HepG2 (cell line): ENCODE measurements at regions of chr3 and their contacts with region 1.

Region 1: GRCh38 chr3:99920481-99921376 is 103.1 kb downstream of the CMSS1 start:
- DNase-seq: peak; percentile 97
- ATAC-seq: peak; percentile 89
- H3K4me3 ChIP-seq: peak overlapping the region in 2 of 3 experiments; percentile 17 to 42; a peak in 1 of 6 replicates
- H3K27ac ChIP-seq: peak overlapping the region; percentile 94
- H3K4me1 ChIP-seq: peaks cover 100% of the 10 kb centered on the region
- H3K27me3 ChIP-seq: no peaks in the 10 kb centered on the region
- CTCF ChIP-seq: peak; percentile 47
- EP300 ChIP-seq: peak; percentile 39 to 95; a peak in 3 of 4 replicates
- POLR2A ChIP-seq: peak; percentile 28 to 58; a peak in 2 of 4 replicates
- RAD21 ChIP-seq: no peak

Region 2: DNA sequence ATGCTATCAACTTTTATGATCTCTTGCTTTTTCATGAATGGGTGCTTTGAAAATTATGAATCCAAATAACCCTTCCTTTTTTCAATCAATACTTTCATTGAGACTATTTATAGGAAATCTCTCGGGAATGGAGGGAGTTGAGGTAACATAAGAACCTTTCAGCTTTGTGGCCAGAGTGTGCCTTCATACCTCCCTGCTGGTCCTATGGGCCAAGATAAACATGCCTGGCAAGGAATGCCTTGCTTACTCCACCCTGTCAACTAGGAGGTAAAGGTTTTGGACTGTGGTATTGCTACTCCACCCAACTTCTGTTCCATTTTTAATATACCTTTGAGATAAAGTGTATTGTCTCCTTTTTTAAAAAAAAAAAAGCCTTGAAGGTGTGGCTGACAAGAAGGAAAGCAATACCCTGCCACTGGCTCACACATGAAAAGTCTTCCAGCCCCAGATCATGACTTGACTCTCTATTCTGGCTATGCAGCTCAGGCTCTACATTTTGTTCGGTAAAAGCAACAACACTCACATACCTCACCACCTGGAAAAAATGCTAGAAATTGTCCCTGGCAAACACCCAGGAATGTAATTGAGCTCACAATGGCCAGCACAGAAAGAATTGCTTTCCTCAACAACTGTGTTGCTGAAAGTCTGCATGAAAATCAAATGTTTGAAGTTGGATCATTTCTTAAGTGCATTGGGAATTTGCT is 246.5 kb before region 1 on chr3:
- CTCF ChIA-PET with region 1: no interaction called
- POLR2A ChIA-PET with region 1: no interaction called
- in situ Hi-C with region 1: no loop called
- intact Hi-C with region 1: no loop called
- DNase-seq: no peak
- ATAC-seq: no peak
- H3K4me3 ChIP-seq: no peak overlapping the region
- H3K27ac ChIP-seq: no peak overlapping the region
- H3K4me1 ChIP-seq: no peaks in the 10 kb centered on the region
- H3K27me3 ChIP-seq: no peaks in the 10 kb centered on the region; a peak in 1 of 5 replicates
- CTCF ChIP-seq: no peak
- EP300 ChIP-seq: no peak
- POLR2A ChIP-seq: no peak
- RAD21 ChIP-seq: no peak

Region 3: GRCh38 chr3:99825004-99825640 is 95.6 kb before region 1 on chr3:
- CTCF ChIA-PET with region 1: no interaction called
- POLR2A ChIA-PET with region 1: no interaction called
- in situ Hi-C with region 1: no loop called
- intact Hi-C with region 1: no loop called
- DNase-seq: no peak
- ATAC-seq: no peak
- H3K4me3 ChIP-seq: no peak overlapping the region
- H3K27ac ChIP-seq: no peak overlapping the region
- H3K4me1 ChIP-seq: peaks cover 22% of the 10 kb centered on the region; the same call in 1 of the 2 replicates
- H3K27me3 ChIP-seq: no peaks in the 10 kb centered on the region
- CTCF ChIP-seq: no peak
- EP300 ChIP-seq: no peak
- POLR2A ChIP-seq: no peak
- RAD21 ChIP-seq: no peak

Region 4: DNA sequence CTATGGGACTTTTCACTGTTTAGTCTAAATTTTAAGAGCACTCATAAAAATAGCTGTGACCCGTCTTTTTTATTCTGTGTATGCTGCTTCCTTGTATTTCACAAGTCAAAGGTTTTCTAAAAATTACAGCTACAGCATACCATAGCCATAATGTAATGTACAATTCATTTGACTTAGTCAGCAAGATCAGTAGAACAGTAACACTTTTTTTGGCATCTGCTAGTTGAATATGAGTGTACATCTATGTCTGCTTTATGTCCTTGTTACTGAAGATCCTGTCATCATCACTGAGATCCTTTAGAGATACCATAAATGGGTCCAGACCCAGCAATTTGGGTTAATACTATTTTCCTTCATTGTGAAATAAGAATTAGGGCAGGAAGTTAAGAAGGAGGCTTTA is 60.9 kb before region 1 on chr3:
- CTCF ChIA-PET with region 1: no interaction called
- POLR2A ChIA-PET with region 1: interaction called, 3 read pairs
- in situ Hi-C with region 1: no loop called
- intact Hi-C with region 1: loop called (anchors 5 kb)
- DNase-seq: no peak
- ATAC-seq: no peak
- H3K4me3 ChIP-seq: no peak overlapping the region
- H3K27ac ChIP-seq: no peak overlapping the region
- H3K4me1 ChIP-seq: peaks cover 96% of the 10 kb centered on the region
- H3K27me3 ChIP-seq: no peaks in the 10 kb centered on the region
- CTCF ChIP-seq: no peak
- EP300 ChIP-seq: no peak
- POLR2A ChIP-seq: no peak
- RAD21 ChIP-seq: no peak

Region 5: GRCh38 chr3:99901200-99901926 is 19.4 kb before region 1 on chr3:
- CTCF ChIA-PET with region 1: no interaction called
- POLR2A ChIA-PET with region 1: interaction called, 32 read pairs
- in situ Hi-C with region 1: no loop called
- intact Hi-C with region 1: loop called (anchors 2 kb)
- DNase-seq: peak; percentile 94
- ATAC-seq: peak; percentile 98
- H3K4me3 ChIP-seq: peak overlapping the region in 1 of 3 experiments; percentile 32; a peak in 1 of 6 replicates
- H3K27ac ChIP-seq: peak overlapping the region; percentile 73
- H3K4me1 ChIP-seq: peaks cover 80% of the 10 kb centered on the region
- H3K27me3 ChIP-seq: no peaks in the 10 kb centered on the region
- CTCF ChIP-seq: no peak
- EP300 ChIP-seq: peak in 1 of 2 experiments; percentile 90; a peak in 2 of 4 replicates
- POLR2A ChIP-seq: no peak
- RAD21 ChIP-seq: no peak

Region 6: DNA sequence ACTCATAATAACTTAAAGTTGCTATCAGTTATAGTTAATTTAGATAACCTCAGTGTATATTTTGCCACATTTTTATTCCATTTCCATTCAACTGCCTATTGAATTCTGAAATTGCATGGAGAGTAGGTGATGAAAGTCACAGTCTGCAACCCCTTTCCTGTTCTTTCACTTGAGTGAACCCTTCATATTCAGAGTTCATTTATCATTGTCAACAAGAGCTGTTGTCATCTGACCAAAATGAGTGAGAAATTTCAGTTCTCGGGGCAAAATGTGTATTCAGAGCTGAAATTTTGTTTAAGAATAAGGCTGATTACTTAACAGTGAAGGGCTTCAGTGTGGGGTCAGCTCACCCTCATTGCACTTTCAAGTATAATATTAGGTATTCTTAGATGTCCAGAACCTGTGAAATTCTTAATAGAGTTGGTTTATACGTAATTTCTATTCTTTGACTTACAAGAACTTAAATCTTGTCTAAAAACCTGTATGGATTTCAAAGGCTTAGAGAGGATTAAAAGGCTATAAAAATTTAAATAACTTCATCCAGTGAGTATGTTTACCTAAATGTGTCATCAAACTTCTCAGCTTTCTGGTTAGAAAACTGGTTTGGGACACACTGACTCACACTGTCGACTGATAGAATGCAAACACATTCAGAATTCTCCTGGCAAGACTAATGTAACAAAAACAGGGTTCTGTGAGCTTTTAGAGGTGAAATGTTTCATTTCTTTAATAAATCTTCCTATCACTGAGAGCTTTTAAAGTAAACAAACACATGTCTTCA is 10.8 kb before region 1 on chr3:
- CTCF ChIA-PET with region 1: no interaction called
- POLR2A ChIA-PET with region 1: interaction called, 11 read pairs
- in situ Hi-C with region 1: no loop called
- intact Hi-C with region 1: no loop called
- DNase-seq: peak; percentile 42
- ATAC-seq: peak; percentile 49; the same call in 1 of the 3 replicates
- H3K4me3 ChIP-seq: no peak overlapping the region
- H3K27ac ChIP-seq: peak overlapping the region; percentile 25
- H3K4me1 ChIP-seq: peaks cover 54% of the 10 kb centered on the region
- H3K27me3 ChIP-seq: no peaks in the 10 kb centered on the region
- CTCF ChIP-seq: no peak
- EP300 ChIP-seq: no peak
- POLR2A ChIP-seq: no peak
- RAD21 ChIP-seq: no peak